Activated CD4-positive, alpha-beta memory T cell treated with anti-CD3 and anti-CD28 coated beads for 36 hours (primary cell): ENCODE measurements at regions of chr6 and their contacts with region 1.

Region 1: DNA sequence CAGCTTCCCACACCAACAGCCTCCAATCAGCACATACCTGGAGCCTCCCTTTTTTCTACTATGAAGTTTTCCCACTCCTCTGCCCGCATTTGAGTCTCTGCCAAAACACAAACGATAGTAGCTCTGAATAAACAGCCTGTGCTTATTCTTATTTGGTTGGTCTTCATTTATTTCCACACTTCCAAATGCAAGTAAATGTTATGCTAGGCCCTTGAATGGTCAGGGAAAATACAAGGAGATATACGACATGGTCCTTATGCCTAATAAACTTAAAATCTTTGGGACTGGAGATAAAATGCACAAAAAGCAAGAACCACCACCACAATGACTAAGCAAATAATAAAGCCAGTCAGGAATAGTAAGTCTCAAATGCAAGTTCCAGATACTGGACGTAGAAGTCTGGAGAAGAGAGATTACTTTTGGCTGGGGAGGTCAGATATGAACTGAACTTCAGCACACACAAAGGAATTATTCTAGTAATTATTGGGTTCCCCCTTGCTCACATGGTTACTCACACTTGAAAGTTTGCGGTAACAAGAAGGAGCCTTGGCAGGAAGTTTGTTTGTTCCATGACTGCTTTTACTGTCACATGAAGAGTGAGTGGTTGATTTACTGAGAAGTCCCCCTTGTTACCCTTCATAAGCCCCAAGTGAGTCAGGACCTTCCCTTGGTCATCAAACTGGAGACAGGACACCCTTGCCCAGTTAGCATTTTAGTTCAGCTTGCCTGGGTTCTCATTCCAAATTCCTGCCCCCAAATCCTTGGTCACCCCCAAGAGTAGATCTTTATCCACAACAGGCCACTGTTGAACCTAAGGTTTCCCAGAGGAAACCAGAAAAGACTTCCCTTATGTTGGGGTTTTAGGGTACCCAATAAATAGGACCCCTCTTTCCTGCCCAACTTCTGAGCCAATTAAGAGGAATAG is 511.2 kb upstream of the JARID2 start:
- DNase-seq: peak; percentile 67
- H3K4me3 Mint-ChIP-seq: peak overlapping the region; percentile 73
- H3K27ac Mint-ChIP-seq: peak overlapping the region; percentile 100
- H3K4me1 Mint-ChIP-seq: peaks cover 98% of the 10 kb centered on the region
- H3K27me3 Mint-ChIP-seq: no peaks in the 10 kb centered on the region

Region 2: DNA sequence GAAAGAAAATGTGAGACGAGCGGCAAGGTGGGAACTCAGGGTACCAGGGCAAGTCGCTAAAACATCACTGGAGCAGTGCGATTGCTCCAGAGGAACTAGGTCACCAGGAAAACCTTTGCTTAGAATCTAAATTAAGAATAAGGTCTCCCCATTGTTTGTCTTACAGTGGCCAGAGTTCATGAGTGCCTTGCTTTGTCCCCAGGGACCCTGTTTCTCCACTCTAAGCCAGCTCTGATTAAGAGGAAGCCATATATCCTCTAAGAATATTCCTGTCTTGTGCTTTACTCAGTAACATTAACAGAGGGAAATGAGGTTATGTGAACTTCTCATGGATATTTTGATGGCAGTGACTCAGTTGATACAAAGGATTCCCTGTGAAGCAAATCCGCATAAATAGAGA is 311.3 kb before region 1 on chr6:
- CTCF ChIA-PET with region 1: no interaction called
- POLR2A ChIA-PET with region 1: no interaction called
- intact Hi-C with region 1: loop called (anchors 1 kb)
- DNase-seq: no peak
- H3K4me3 Mint-ChIP-seq: no peak overlapping the region
- H3K27ac Mint-ChIP-seq: peak overlapping the region; percentile 73
- H3K4me1 Mint-ChIP-seq: peaks cover 46% of the 10 kb centered on the region
- H3K27me3 Mint-ChIP-seq: no peaks in the 10 kb centered on the region

Region 3: GRCh38 chr6:14676064-14676463 is 58.6 kb before region 1 on chr6:
- CTCF ChIA-PET with region 1: no interaction called
- POLR2A ChIA-PET with region 1: interaction called, 3 read pairs
- intact Hi-C with region 1: loop called (anchors 1 kb)
- DNase-seq: peak; percentile 35
- H3K4me3 Mint-ChIP-seq: no peak overlapping the region
- H3K27ac Mint-ChIP-seq: peak overlapping the region; percentile 80
- H3K4me1 Mint-ChIP-seq: peaks cover 43% of the 10 kb centered on the region
- H3K27me3 Mint-ChIP-seq: no peaks in the 10 kb centered on the region

Region 4: GRCh38 chr6:14784596-14785492 is 50.2 kb after region 1 on chr6:
- CTCF ChIA-PET with region 1: no interaction called
- POLR2A ChIA-PET with region 1: interaction called, 3 read pairs
- intact Hi-C with region 1: loop called (anchors 2 kb)
- DNase-seq: peak; percentile 36
- H3K4me3 Mint-ChIP-seq: peak overlapping the region; percentile 49
- H3K27ac Mint-ChIP-seq: peak overlapping the region; percentile 71
- H3K4me1 Mint-ChIP-seq: peaks cover 36% of the 10 kb centered on the region
- H3K27me3 Mint-ChIP-seq: no peaks in the 10 kb centered on the region

Region 5: GRCh38 chr6:15245361-15246216 is 510.9 kb after region 1 on chr6 and contains the start of gene JARID2:
- CTCF ChIA-PET with region 1: no interaction called
- POLR2A ChIA-PET with region 1: interaction called, 9 read pairs
- intact Hi-C with region 1: loop called (anchors 1 kb)
- DNase-seq: peak; percentile 98
- H3K4me3 Mint-ChIP-seq: peak within 1 kb of the TSS; percentile 100
- H3K27ac Mint-ChIP-seq: peak within 1 kb of the TSS; percentile 94
- H3K4me1 Mint-ChIP-seq: peaks cover 18% of the 10 kb centered on the region
- H3K27me3 Mint-ChIP-seq: peaks cover 1% of the 10 kb centered on the region
- total RNA-seq, gene JARID2: 41.4 to 44.0 TPM

Region 6: DNA sequence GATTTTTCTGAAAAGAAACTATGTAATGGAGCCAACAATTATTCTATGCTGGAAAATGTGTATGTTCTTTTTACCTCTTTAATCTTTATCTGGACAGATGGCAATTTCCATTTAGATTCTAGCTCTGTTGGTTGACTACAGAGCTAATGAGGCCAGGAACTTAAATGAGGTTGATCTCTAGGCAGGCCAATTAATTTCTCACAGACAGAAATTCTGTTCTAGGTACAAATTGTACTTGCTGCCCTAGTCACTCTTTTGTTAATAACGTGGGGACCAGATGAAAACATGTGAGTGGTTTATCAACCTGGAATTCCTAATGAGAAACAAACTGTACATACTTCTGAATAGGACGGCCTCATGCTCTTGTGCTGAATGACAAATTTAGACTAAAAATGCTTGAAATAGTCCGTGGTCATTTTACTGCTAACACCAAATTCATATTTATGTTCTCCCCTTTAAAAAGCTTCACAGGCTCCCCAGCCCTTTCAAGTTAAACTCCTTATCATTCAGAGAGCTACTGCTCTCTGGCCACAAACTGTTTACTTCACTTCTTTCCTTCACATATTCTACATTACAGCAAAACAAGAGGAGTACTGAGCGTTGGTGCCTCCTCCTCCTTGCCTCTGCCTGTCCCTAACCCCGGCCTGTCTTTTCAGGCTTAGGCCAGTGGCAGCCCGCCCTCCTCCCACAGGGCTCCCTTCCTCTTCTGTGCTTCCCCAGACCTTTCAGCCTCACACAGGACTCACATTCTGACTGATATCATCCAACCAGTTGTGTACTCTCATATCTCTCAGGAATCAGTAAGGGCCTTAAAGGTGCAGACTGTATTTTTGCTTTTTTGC is 886.7 kb after region 1 on chr6:
- CTCF ChIA-PET with region 1: no interaction called
- POLR2A ChIA-PET with region 1: no interaction called
- intact Hi-C with region 1: loop called (anchors 5 kb)
- DNase-seq: peak; percentile 45
- H3K4me3 Mint-ChIP-seq: no peak overlapping the region
- H3K27ac Mint-ChIP-seq: no peak overlapping the region
- H3K4me1 Mint-ChIP-seq: peaks cover 46% of the 10 kb centered on the region
- H3K27me3 Mint-ChIP-seq: no peaks in the 10 kb centered on the region